HepG2 (cell line): ENCODE measurements at regions of chr20 and their contacts with region 1.

Region 1: GRCh38 chr20:63309261-63310071 is 16.5 kb downstream of the COL20A1 start:
- DNase-seq: peak; percentile 41
- ATAC-seq: peak; percentile 70
- H3K4me3 ChIP-seq: no peak overlapping the region
- H3K27ac ChIP-seq: no peak overlapping the region
- H3K4me1 ChIP-seq: no peaks in the 10 kb centered on the region
- H3K27me3 ChIP-seq: peaks cover 24 to 78% of the 10 kb centered on the region in 2 experiments
- CTCF ChIP-seq: peak; percentile 97
- EP300 ChIP-seq: no peak
- POLR2A ChIP-seq: no peak
- RAD21 ChIP-seq: peak; percentile 94

Region 2: DNA sequence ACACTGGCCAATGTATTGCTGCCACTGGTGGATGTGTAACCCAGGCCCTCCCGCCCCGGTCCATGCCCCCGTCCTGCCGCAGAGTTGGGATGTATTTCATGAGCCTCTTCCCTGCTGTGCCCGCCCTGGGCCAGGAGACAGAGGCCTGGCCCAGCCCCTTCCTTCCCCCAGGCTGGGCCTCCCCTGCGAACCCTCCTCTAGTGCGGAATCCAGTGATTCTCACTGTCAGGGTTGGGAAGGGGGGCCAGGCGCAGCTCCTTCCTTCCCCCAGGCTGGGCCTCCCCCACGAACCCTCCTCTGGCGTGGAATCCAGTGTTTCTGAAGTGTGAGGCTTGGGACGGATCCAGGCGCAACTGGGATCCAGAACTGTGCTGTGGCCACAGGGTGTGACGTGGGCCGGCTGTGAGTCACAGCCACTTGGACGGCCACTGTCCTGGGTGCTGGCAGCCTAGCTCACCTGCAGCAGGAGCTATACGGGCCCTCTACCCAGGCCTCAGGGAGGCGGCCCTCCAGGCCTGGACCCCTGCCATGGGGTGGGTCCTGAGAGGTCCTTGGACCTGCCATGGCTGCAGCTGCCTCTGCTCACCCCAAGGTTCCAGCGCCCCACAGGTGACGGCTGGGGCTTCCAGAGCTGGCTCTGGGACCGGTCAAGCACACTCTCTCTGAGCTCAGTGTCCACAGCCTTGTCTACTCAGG is 11.8 kb after region 1 on chr20:
- CTCF ChIA-PET with region 1: no interaction called
- POLR2A ChIA-PET with region 1: no interaction called
- in situ Hi-C with region 1: no loop called
- intact Hi-C with region 1: no loop called
- DNase-seq: no peak
- ATAC-seq: peak; percentile 10; the same call in 2 of the 3 replicates
- H3K4me3 ChIP-seq: no peak overlapping the region
- H3K27ac ChIP-seq: no peak overlapping the region
- H3K4me1 ChIP-seq: no peaks in the 10 kb centered on the region
- H3K27me3 ChIP-seq: peaks cover 5 to 40% of the 10 kb centered on the region in 2 experiments; a peak in 4 of 5 replicates
- CTCF ChIP-seq: no peak
- EP300 ChIP-seq: no peak
- POLR2A ChIP-seq: no peak
- RAD21 ChIP-seq: no peak

Region 3: DNA sequence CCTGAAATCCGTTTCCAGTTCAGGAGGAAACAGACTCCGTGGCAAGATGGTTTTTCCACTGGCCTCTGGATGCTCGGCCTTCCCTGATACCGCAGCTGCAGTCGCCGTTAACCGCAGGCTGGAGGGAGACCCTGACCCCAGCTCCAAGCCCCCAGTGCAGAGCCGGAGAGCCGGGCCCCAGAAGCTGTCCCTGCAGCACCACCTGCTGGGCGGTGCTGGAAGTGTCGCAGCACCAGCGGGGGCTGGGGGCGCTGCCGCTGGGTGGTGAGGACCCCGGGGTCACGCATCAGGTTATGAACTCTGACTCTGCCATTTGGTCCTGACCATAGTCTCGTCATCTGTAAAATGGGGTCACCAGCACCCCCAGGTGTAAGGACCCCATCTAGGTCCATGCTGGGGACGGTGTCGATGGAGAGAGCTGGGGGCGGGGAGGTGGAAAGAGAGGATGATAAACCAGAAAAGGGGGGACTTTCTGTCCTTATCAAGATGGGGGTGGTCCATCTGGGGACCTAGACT is 72.4 kb after region 1 on chr20:
- CTCF ChIA-PET with region 1: interaction called, 69 read pairs
- POLR2A ChIA-PET with region 1: interaction called, 4 read pairs
- in situ Hi-C with region 1: loop called (anchors 5 kb)
- intact Hi-C with region 1: loop called (anchors 1 kb)
- DNase-seq: no peak
- ATAC-seq: peak; percentile 51
- H3K4me3 ChIP-seq: no peak overlapping the region
- H3K27ac ChIP-seq: no peak overlapping the region
- H3K4me1 ChIP-seq: peaks cover 14% of the 10 kb centered on the region
- H3K27me3 ChIP-seq: peaks cover 5 to 32% of the 10 kb centered on the region in 2 experiments; a peak in 3 of 5 replicates
- CTCF ChIP-seq: peak; percentile 100
- EP300 ChIP-seq: no peak
- POLR2A ChIP-seq: no peak
- RAD21 ChIP-seq: peak; percentile 99